CD4-positive, alpha-beta T cell (primary cell): ENCODE measurements at regions of chr14 and their contacts with region 1.

Region 1: GRCh38 chr14:24108336-24108874 is 6.2 kb upstream of the DCAF11 start:
- DNase-seq: no peak
- ATAC-seq: peak; percentile 25
- H3K4me3 ChIP-seq: no peak overlapping the region
- H3K4me3 Mint-ChIP-seq: peak overlapping the region; percentile 83
- H3K27ac ChIP-seq: peak overlapping the region; percentile 28 to 39
- H3K27ac Mint-ChIP-seq: peak overlapping the region; percentile 95
- H3K4me1 ChIP-seq: peaks cover 20% of the 10 kb centered on the region
- H3K4me1 Mint-ChIP-seq: peaks cover 10% of the 10 kb centered on the region
- H3K27me3 ChIP-seq: no peaks in the 10 kb centered on the region
- H3K27me3 Mint-ChIP-seq: no peaks in the 10 kb centered on the region
- CTCF ChIP-seq: no peak

Region 2: GRCh38 chr14:23814527-23815256 is 293.7 kb before region 1 on chr14:
- CTCF ChIA-PET with region 1: no interaction called
- POLR2A ChIA-PET with region 1: no interaction called
- intact Hi-C with region 1: no loop called
- DNase-seq: no peak
- ATAC-seq: no peak
- H3K4me3 ChIP-seq: no peak overlapping the region
- H3K4me3 Mint-ChIP-seq: no peak overlapping the region
- H3K27ac ChIP-seq: no peak overlapping the region
- H3K27ac Mint-ChIP-seq: no peak overlapping the region
- H3K4me1 ChIP-seq: no peaks in the 10 kb centered on the region
- H3K4me1 Mint-ChIP-seq: no peaks in the 10 kb centered on the region
- H3K27me3 ChIP-seq: peaks cover 0 to 2% of the 10 kb centered on the region in 2 experiments
- H3K27me3 Mint-ChIP-seq: peaks cover 24% of the 10 kb centered on the region
- CTCF ChIP-seq: no peak

Region 3: GRCh38 chr14:23984891-23985602 is 123.4 kb before region 1 on chr14:
- CTCF ChIA-PET with region 1: interaction called, 4 read pairs
- POLR2A ChIA-PET with region 1: interaction called, 3 read pairs
- intact Hi-C with region 1: loop called in 1 of 2 experiments (anchors 5 kb)
- DNase-seq: no peak
- ATAC-seq: no peak
- H3K4me3 ChIP-seq: no peak overlapping the region
- H3K4me3 Mint-ChIP-seq: no peak overlapping the region
- H3K27ac ChIP-seq: no peak overlapping the region
- H3K27ac Mint-ChIP-seq: no peak overlapping the region
- H3K4me1 ChIP-seq: peaks cover 15% of the 10 kb centered on the region
- H3K4me1 Mint-ChIP-seq: peaks cover 18% of the 10 kb centered on the region
- H3K27me3 ChIP-seq: no peaks in the 10 kb centered on the region
- H3K27me3 Mint-ChIP-seq: no peaks in the 10 kb centered on the region
- CTCF ChIP-seq: no peak

Region 4: DNA sequence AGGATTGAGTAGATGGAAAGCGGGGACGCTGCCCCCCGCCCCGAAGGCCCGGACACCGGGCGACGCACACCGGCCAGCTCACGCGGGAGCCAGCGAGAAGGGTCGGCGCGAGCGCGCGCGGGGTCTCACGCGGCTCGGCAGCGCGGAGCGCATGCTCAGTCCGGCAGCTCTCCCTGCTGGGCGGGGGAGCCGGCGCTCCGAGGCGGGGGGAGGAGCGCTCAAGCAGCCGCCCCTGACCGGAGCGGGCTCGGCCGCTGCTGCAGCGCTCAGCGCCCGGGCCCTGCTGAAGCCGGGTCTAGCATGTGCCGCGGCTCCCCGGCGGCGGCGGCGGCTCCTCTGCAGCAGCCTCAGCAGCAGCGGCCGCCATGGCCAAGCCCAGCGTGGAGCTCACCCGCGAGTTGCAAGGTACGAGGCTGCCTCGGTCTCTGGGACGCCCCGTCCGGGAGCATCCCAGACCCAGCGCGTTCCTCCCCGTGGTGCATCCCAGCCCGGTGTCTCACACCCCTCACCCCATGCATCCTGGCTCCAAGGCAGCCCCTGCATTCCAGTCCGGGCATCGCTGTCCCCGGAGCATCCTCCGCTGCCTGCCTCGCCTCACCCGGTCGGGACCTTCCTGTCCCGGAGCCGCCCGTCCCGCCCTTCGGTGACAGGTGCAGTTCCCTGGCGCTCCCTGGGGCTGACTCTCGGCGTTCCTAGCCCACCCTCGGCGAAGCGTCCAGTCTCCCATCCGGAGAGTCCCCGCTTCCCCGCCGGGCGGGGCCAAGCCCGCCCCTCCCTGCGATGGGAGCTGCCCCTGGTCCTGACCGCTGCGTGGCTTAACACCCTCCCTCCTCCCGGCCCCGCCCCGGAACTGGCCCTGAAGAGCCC is 56.4 kb before region 1 on chr14 and contains the start of gene CARMIL3:
- CTCF ChIA-PET with region 1: interaction called, 10 read pairs
- POLR2A ChIA-PET with region 1: interaction called, 7 read pairs
- intact Hi-C with region 1: no loop called
- DNase-seq: peak in 13 of 14 experiments; percentile 29 to 82 (median 51)
- ATAC-seq: peak; percentile 76
- H3K4me3 ChIP-seq: peak within 1 kb of the TSS; percentile 71
- H3K4me3 Mint-ChIP-seq: peak within 1 kb of the TSS; percentile 90
- H3K27ac ChIP-seq: no peak within 1 kb of the TSS
- H3K27ac Mint-ChIP-seq: no peak within 1 kb of the TSS
- H3K4me1 ChIP-seq: peaks cover 21% of the 10 kb centered on the region
- H3K4me1 Mint-ChIP-seq: peaks cover 14% of the 10 kb centered on the region
- H3K27me3 ChIP-seq: peaks cover 0 to 16% of the 10 kb centered on the region in 2 experiments
- H3K27me3 Mint-ChIP-seq: peaks cover 25% of the 10 kb centered on the region
- CTCF ChIP-seq: no peak
- total RNA-seq, gene CARMIL3: 0.05 to 0.11 TPM

Region 5: GRCh38 chr14:24080888-24081738 is 27.3 kb before region 1 on chr14:
- CTCF ChIA-PET with region 1: interaction called, 8 read pairs
- POLR2A ChIA-PET with region 1: interaction called, 48 read pairs
- intact Hi-C with region 1: no loop called
- DNase-seq: peak; percentile 47 to 82 (median 68)
- ATAC-seq: peak; percentile 90
- H3K4me3 ChIP-seq: peak overlapping the region; percentile 56
- H3K4me3 Mint-ChIP-seq: peak overlapping the region; percentile 93
- H3K27ac ChIP-seq: peak overlapping the region; percentile 2 to 52
- H3K27ac Mint-ChIP-seq: peak overlapping the region; percentile 90
- H3K4me1 ChIP-seq: peaks cover 21% of the 10 kb centered on the region
- H3K4me1 Mint-ChIP-seq: peaks cover 24% of the 10 kb centered on the region
- H3K27me3 ChIP-seq: no peaks in the 10 kb centered on the region
- H3K27me3 Mint-ChIP-seq: no peaks in the 10 kb centered on the region
- CTCF ChIP-seq: no peak

Region 6: GRCh38 chr14:24129410-24129998 is 21.1 kb after region 1 on chr14:
- CTCF ChIA-PET with region 1: interaction called, 11 read pairs
- POLR2A ChIA-PET with region 1: interaction called, 296 read pairs
- intact Hi-C with region 1: no loop called
- DNase-seq: no peak
- ATAC-seq: no peak
- H3K4me3 ChIP-seq: no peak overlapping the region
- H3K4me3 Mint-ChIP-seq: no peak overlapping the region
- H3K27ac ChIP-seq: no peak overlapping the region
- H3K27ac Mint-ChIP-seq: no peak overlapping the region
- H3K4me1 ChIP-seq: peaks cover 18% of the 10 kb centered on the region
- H3K4me1 Mint-ChIP-seq: peaks cover 25% of the 10 kb centered on the region
- H3K27me3 ChIP-seq: no peaks in the 10 kb centered on the region
- H3K27me3 Mint-ChIP-seq: no peaks in the 10 kb centered on the region
- CTCF ChIP-seq: no peak

Region 7: GRCh38 chr14:24141097-24141880 is 32.9 kb after region 1 on chr14 and contains the start of gene EMC9:
- CTCF ChIA-PET with region 1: interaction called, 15 read pairs
- POLR2A ChIA-PET with region 1: interaction called, 296 read pairs
- intact Hi-C with region 1: no loop called
- DNase-seq: peak; percentile 97 to 100 (median 99)
- ATAC-seq: peak; percentile 90
- H3K4me3 ChIP-seq: peak within 1 kb of the TSS; percentile 92
- H3K4me3 Mint-ChIP-seq: peak within 1 kb of the TSS; percentile 95
- H3K27ac ChIP-seq: peak within 1 kb of the TSS; percentile 62 to 71
- H3K27ac Mint-ChIP-seq: peak within 1 kb of the TSS; percentile 90
- H3K4me1 ChIP-seq: peaks cover 73% of the 10 kb centered on the region
- H3K4me1 Mint-ChIP-seq: peaks cover 76% of the 10 kb centered on the region
- H3K27me3 ChIP-seq: no peaks in the 10 kb centered on the region
- H3K27me3 Mint-ChIP-seq: no peaks in the 10 kb centered on the region
- CTCF ChIP-seq: no peak
- total RNA-seq, gene EMC9: 11.8 to 13.1 TPM